ENCODE measurements at regions of chrX and their contacts with region 1.

Region 1: DNA sequence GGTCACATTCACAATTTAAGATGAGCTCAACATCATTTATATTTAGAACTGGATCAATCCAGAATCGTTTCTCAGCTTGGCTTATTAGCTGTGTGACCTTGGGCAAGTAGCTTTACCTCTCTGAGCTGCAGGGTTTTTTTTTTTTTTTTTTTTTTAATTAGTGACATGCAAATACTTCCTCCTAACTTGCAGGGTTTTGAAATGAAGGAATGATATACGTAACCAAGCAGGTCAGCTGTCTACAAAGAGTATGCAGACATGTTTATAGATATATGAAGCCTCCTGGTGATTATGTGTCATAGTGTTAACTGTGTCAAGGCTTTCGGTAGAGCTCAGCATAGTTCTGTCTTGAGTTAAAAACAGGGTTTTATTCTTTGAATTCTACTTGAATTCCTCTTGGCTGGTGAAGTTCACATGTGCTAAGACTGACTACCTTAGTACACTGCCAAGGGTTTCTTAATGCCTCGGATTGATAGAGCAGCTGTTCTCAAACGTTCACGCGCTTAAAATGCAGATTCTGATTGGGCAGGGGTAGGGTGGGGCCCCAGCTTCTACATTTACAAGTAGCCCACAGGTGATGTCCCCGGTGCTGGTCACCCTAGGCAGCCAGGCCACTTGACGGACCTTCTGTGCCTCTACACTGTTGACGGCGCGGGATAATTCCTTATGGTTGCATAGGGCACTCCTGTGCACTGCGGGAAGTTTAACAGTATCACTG is 650 bp upstream of the STS start:
- DNase-seq: peak in 4 of 35 experiments; percentile 0 to 9 (median 3)
- ATAC-seq: peak in 1 of 4 experiments; percentile 3
- H3K4me3 ChIP-seq: peak overlapping the region; percentile 64 to 100
- H3K4me3 Mint-ChIP-seq: peak overlapping the region; percentile 81 to 86 (median 83)
- H3K27ac ChIP-seq: peak overlapping the region; percentile 38
- H3K27ac Mint-ChIP-seq: peak overlapping the region; percentile 73 to 92
- H3K4me1 ChIP-seq: peaks cover 7 to 11% of the 10 kb centered on the region in 2 experiments
- H3K4me1 Mint-ChIP-seq: peaks cover 17 to 51% (median 31%) of the 10 kb centered on the region in 3 donors
- H3K27me3 ChIP-seq: no peaks in the 10 kb centered on the region
- H3K27me3 Mint-ChIP-seq: no peaks in the 10 kb centered on the region

Region 2: GRCh38 chrX:7047951-7048350 is 98.9 kb before region 1 on chrX:
- CTCF ChIA-PET with region 1: no interaction called
- POLR2A ChIA-PET with region 1: no interaction called
- DNase-seq: no peak
- ATAC-seq: no peak
- H3K4me3 ChIP-seq: no peak overlapping the region
- H3K4me3 Mint-ChIP-seq: no peak overlapping the region
- H3K27ac ChIP-seq: no peak overlapping the region
- H3K27ac Mint-ChIP-seq: no peak overlapping the region
- H3K4me1 ChIP-seq: no peaks in the 10 kb centered on the region
- H3K4me1 Mint-ChIP-seq: peaks cover 0 to 20% (median 6%) of the 10 kb centered on the region in 3 donors
- H3K27me3 ChIP-seq: no peaks in the 10 kb centered on the region
- H3K27me3 Mint-ChIP-seq: no peaks in the 10 kb centered on the region

Region 3: DNA sequence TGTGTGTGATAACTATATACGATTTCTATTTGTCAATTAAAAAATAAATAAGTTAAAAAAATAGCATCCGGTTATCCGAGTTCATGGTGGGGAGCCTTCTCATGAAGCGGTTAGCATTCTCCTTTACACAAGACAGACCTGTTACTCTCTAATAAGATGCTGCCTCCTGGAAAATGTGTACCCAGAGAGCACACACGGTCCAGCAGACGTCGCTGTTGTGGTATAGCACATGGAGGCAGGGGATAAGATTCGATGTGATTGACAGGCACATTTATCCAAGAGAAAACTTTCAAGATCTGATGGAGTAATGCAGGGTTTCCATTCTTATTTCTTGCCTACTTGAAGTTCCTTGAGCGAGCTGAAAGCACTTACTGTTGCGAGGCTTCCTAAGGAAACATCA is 62.0 kb before region 1 on chrX:
- CTCF ChIA-PET with region 1: no interaction called
- POLR2A ChIA-PET with region 1: interaction called in 1 of 2 experiments, 10 read pairs
- DNase-seq: no peak
- ATAC-seq: no peak
- H3K4me3 ChIP-seq: no peak overlapping the region
- H3K4me3 Mint-ChIP-seq: no peak overlapping the region
- H3K27ac ChIP-seq: no peak overlapping the region
- H3K27ac Mint-ChIP-seq: peak overlapping the region in 1 of 2 donors; percentile 68
- H3K4me1 ChIP-seq: peaks cover 36 to 67% of the 10 kb centered on the region in 2 experiments
- H3K4me1 Mint-ChIP-seq: peaks cover 78 to 88% (median 83%) of the 10 kb centered on the region in 3 donors
- H3K27me3 ChIP-seq: no peaks in the 10 kb centered on the region
- H3K27me3 Mint-ChIP-seq: no peaks in the 10 kb centered on the region